CD4-positive, alpha-beta memory T cell (primary cell): ENCODE measurements at regions of chr6 and their contacts with region 1.

Region 1: DNA sequence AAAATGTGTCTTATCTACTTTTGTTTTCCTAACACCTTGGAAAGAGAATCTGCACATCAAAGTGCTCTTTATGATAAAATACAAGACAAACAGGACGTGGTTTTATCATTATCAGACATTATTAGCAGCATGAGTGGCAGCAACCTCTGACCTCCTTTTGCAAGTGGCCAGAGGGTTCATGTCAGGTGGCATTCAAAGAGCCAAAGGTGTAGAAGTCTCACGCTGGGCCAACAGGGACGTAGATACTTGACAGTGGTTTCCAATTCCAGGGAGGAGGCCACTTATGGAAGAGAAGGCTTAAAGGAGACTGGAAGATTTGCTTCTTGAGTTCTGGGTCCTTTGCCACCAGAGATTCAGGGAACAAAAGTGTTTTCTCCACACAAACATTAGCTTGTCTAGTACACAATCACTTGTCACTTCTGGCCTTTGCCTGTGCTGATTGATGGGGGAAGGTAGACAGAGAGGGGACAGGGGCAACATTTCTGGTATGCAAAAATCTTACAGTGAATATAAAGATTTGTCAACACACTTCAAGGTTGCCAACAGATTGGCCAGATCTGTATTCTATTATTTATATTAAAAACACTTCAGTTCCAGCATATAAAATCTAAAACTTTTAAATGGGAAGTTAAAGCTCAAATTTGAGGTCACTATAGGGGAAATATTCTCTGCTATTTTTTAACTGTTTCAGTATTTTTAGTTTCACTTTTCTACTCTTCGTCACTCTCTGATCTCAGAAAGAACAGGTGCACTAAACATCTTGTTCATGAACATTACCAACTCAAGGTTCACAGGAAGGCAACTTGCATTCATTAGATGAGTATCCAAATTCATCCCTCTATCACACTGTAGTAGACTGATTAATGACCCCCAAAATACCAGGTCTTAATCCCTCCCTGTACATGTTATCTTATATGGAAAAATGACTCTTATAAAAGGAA is 52.1 kb upstream of the FBXO30 start:
- DNase-seq: peak in 2 of 5 donors; percentile 19 to 30
- H3K4me3 ChIP-seq: no peak overlapping the region
- H3K4me3 Mint-ChIP-seq: peak overlapping the region; percentile 53 to 84 (median 72)
- H3K27ac ChIP-seq: peak overlapping the region; percentile 42
- H3K27ac Mint-ChIP-seq: peak overlapping the region; percentile 70 to 93 (median 88)
- H3K4me1 ChIP-seq: peaks cover 38% of the 10 kb centered on the region
- H3K4me1 Mint-ChIP-seq: peaks cover 31 to 44% (median 35%) of the 10 kb centered on the region in 4 donors
- H3K27me3 ChIP-seq: no peaks in the 10 kb centered on the region
- H3K27me3 Mint-ChIP-seq: no peaks in the 10 kb centered on the region

Region 2: GRCh38 chr6:145569140-145569539 is 297.6 kb before region 1 on chr6:
- CTCF ChIA-PET with region 1: no interaction called
- POLR2A ChIA-PET with region 1: no interaction called
- intact Hi-C with region 1: no loop called
- DNase-seq: no peak
- H3K4me3 ChIP-seq: no peak overlapping the region
- H3K4me3 Mint-ChIP-seq: no peak overlapping the region
- H3K27ac ChIP-seq: no peak overlapping the region
- H3K27ac Mint-ChIP-seq: no peak overlapping the region
- H3K4me1 ChIP-seq: no peaks in the 10 kb centered on the region
- H3K4me1 Mint-ChIP-seq: no peaks in the 10 kb centered on the region
- H3K27me3 ChIP-seq: no peaks in the 10 kb centered on the region
- H3K27me3 Mint-ChIP-seq: no peaks in the 10 kb centered on the region

Region 3: GRCh38 chr6:145814501-145815308 is 52.0 kb before region 1 on chr6 and contains the start of gene FBXO30:
- CTCF ChIA-PET with region 1: interaction called, 12 read pairs
- POLR2A ChIA-PET with region 1: interaction called, 42 read pairs
- intact Hi-C with region 1: loop called (anchors 2 kb)
- DNase-seq: peak; percentile 85 to 92 (median 88)
- H3K4me3 ChIP-seq: peak within 1 kb of the TSS; percentile 74 to 79
- H3K4me3 Mint-ChIP-seq: peak within 1 kb of the TSS; percentile 93 to 98 (median 95)
- H3K27ac ChIP-seq: peak within 1 kb of the TSS; percentile 86
- H3K27ac Mint-ChIP-seq: peak within 1 kb of the TSS; percentile 96 to 97 (median 96)
- H3K4me1 ChIP-seq: peaks cover 51% of the 10 kb centered on the region
- H3K4me1 Mint-ChIP-seq: peaks cover 26 to 60% (median 30%) of the 10 kb centered on the region in 4 donors
- H3K27me3 ChIP-seq: no peaks in the 10 kb centered on the region
- H3K27me3 Mint-ChIP-seq: no peaks in the 10 kb centered on the region
- total RNA-seq, gene FBXO30: 7.5 to 8.0 TPM

Region 4: DNA sequence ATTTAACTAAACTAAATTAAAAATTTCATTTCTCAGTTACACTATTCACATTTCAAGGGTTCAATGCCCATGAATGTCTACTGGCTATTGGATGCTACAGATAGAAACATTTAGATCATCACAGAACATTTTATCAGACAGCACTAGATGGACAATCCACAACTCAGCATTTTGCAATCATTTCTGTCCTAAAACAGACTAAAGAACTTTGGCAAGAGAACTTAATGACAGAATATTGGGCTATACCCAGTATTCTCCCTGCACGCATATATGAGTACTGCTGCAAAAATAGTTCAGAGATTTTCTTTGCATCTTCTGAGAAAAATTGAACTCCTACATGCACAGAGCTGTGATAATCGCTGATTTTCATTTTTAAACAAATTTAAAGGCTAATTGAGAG is 16.1 kb before region 1 on chr6:
- CTCF ChIA-PET with region 1: no interaction called
- POLR2A ChIA-PET with region 1: no interaction called
- intact Hi-C with region 1: no loop called
- DNase-seq: no peak
- H3K4me3 ChIP-seq: no peak overlapping the region
- H3K4me3 Mint-ChIP-seq: no peak overlapping the region
- H3K27ac ChIP-seq: no peak overlapping the region
- H3K27ac Mint-ChIP-seq: no peak overlapping the region
- H3K4me1 ChIP-seq: no peaks in the 10 kb centered on the region
- H3K4me1 Mint-ChIP-seq: no peaks in the 10 kb centered on the region
- H3K27me3 ChIP-seq: no peaks in the 10 kb centered on the region
- H3K27me3 Mint-ChIP-seq: no peaks in the 10 kb centered on the region